ENCODE measurements at regions of chr3 and their contacts with region 1.

Region 1: DNA sequence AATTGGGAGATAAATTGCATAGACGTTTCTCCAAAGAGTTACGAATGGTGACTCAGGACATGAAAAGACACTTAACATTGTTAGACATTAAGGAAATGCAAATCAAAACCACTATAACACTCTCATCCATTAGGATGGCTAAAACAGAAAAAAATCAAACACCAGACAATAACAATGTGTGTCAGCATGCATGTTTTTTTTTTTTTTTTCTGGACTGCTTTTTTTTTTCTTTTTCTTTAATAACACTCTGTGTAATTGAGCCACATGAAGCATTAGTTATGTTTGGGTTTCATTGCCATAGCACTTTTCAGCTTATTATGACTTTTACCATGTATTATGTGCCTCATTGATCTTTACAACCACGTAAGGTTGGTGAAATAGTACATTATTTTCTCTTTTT is 95.0 kb downstream of the NFKBIZ start:
- DNase-seq: no peak
- ATAC-seq: no peak
- H3K4me3 ChIP-seq: no peak overlapping the region
- H3K27ac ChIP-seq: no peak overlapping the region
- H3K4me1 ChIP-seq: no peaks in the 10 kb centered on the region
- H3K27me3 ChIP-seq: no peaks in the 10 kb centered on the region
- CTCF ChIP-seq: no peak

Region 2: DNA sequence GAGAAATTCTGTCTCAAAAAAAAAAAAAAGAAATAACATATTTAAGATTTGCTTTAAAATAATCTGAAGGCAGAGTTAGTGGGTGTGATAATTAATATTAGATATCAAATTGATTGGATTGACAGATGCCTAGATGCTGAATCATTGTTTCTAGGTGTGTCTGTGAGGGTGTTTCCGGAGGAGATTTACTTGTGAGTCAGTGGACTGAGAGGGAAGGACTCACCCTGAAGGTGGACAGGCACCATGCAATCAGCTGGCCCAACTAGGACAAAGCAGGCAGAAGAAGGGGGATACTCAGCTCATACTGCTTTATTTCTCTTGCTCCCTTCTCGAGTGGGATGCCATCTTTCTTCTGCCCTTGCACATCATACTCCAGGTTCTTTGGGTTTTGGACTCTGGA is 241.1 kb before region 1 on chr3:
- CTCF ChIA-PET with region 1: interaction called, 15 read pairs
- POLR2A ChIA-PET with region 1: no interaction called
- in situ Hi-C with region 1: no loop called
- intact Hi-C with region 1: no loop called
- DNase-seq: no peak
- ATAC-seq: 0 out of 2 replicates have a peak, but pooled peaks have one; percentile 13
- H3K4me3 ChIP-seq: no peak overlapping the region
- H3K27ac ChIP-seq: no peak overlapping the region
- H3K4me1 ChIP-seq: no peaks in the 10 kb centered on the region
- H3K27me3 ChIP-seq: no peaks in the 10 kb centered on the region
- CTCF ChIP-seq: no peak

Region 3: DNA sequence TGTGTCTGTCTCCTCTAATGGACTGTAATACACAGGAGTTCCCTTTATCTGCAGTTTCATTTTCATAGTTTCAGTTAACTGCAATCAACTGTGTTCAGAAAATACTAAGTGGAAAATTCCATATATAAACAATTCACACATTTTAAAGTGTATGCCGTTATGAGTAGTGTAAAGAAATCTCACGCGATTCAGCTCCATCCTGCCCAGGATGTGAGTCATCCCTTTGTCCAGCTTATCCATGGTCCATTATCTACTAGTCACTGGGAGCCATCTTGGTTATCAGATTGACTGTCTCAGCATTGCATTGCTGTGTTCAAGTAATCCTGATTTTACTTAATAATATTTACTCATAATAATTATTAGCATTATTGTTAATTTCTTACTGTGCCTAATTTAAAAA is 505.0 kb after region 1 on chr3:
- CTCF ChIA-PET with region 1: no interaction called
- POLR2A ChIA-PET with region 1: no interaction called
- in situ Hi-C with region 1: no loop called
- intact Hi-C with region 1: no loop called
- DNase-seq: no peak
- ATAC-seq: no peak
- H3K4me3 ChIP-seq: no peak overlapping the region
- H3K27ac ChIP-seq: no peak overlapping the region
- H3K4me1 ChIP-seq: no peaks in the 10 kb centered on the region
- H3K27me3 ChIP-seq: no peaks in the 10 kb centered on the region
- CTCF ChIP-seq: no peak